ENCODE measurements at regions of chr11 and their contacts with region 1.

Region 1: GRCh38 chr11:10413268-10413667 is 41.8 kb upstream of the AMPD3 start:
- DNase-seq: no peak
- ATAC-seq: peak; percentile 96
- H3K4me3 Mint-ChIP-seq: no peak overlapping the region
- H3K27ac Mint-ChIP-seq: no peak overlapping the region
- H3K4me1 Mint-ChIP-seq: peaks cover 22% of the 10 kb centered on the region
- H3K27me3 Mint-ChIP-seq: no peaks in the 10 kb centered on the region
- CTCF ChIP-seq: no peak

Region 2: DNA sequence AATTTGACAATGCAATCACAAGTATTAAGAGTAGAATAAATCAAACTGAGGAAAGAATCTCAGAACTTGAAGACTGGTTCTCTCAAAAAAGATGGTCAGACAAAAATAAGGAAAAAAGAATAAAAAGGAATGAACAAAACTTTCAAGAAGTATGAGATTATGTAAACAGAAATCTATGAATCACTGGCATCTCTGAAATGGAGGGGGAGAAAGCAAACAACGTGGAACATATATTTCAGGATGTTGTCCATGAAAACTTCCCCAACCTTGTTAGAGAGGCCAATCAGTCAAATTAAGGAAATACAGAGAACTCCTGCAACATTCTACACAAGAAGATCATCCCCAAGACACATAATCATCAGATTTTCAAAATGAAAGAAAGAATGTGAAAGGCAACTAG is 354.9 kb before region 1 on chr11:
- CTCF ChIA-PET with region 1: no interaction called
- POLR2A ChIA-PET with region 1: no interaction called
- intact Hi-C with region 1: no loop called
- DNase-seq: no peak
- ATAC-seq: no peak
- H3K4me3 Mint-ChIP-seq: no peak overlapping the region
- H3K27ac Mint-ChIP-seq: no peak overlapping the region
- H3K4me1 Mint-ChIP-seq: no peaks in the 10 kb centered on the region
- H3K27me3 Mint-ChIP-seq: no peaks in the 10 kb centered on the region
- CTCF ChIP-seq: no peak

Region 3: DNA sequence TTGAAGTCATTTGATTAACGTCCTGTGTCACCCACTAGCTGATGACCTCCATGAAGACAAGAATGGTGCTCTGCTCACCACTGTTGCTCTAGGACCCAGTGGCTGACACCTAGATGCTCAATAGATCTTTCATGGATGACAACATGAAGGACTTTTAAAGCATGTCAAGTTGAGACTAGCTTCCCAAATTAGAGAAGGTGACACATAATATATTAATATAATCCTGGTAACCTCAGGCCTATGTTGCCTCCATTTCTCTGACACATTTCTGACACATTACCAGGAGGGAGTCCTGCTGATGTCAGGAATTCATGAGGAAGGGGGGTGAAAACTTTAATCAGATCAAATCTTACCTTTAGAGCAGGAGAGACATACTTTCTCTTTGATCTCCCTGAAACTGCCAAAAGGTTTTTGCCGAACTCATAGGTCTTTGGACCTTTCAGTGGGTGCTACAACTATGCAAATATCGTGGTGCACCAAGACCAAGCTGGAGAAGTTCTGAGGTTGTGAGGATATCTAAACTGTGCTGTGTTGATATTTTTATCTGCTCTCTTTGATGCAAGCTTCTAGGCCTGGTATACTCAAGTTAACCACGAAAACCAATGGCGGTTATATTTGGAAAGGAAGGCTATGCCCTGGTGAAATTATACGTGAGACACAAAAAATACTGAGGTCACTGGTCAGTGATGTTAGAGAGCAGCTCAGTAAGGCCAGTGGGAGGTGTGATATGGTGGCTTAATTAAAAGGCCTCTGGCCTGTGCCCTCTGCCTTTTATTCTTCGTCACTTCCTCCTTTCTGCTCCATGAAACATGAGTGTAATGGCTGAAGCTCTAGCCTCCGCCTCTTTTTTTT is 28.6 kb after region 1 on chr11:
- CTCF ChIA-PET with region 1: interaction called, 14 read pairs
- POLR2A ChIA-PET with region 1: interaction called, 15 read pairs
- intact Hi-C with region 1: no loop called
- DNase-seq: no peak
- ATAC-seq: peak; percentile 84
- H3K4me3 Mint-ChIP-seq: peak overlapping the region; percentile 60
- H3K27ac Mint-ChIP-seq: peak overlapping the region; percentile 97
- H3K4me1 Mint-ChIP-seq: peaks cover 48% of the 10 kb centered on the region
- H3K27me3 Mint-ChIP-seq: no peaks in the 10 kb centered on the region
- CTCF ChIP-seq: no peak

Region 4: GRCh38 chr11:10490398-10491241 is 77.4 kb after region 1 on chr11:
- CTCF ChIA-PET with region 1: interaction called, 14 read pairs
- POLR2A ChIA-PET with region 1: interaction called, 14 read pairs
- intact Hi-C with region 1: loop called (anchors 1 kb)
- DNase-seq: no peak
- ATAC-seq: no peak
- H3K4me3 Mint-ChIP-seq: no peak overlapping the region
- H3K27ac Mint-ChIP-seq: peak overlapping the region; percentile 91
- H3K4me1 Mint-ChIP-seq: peaks cover 43% of the 10 kb centered on the region
- H3K27me3 Mint-ChIP-seq: no peaks in the 10 kb centered on the region
- CTCF ChIP-seq: no peak

Region 5: GRCh38 chr11:10514210-10514609 is 100.9 kb after region 1 on chr11:
- CTCF ChIA-PET with region 1: interaction called, 47 read pairs
- POLR2A ChIA-PET with region 1: interaction called, 3 read pairs
- intact Hi-C with region 1: loop called (anchors 1 kb)
- DNase-seq: no peak
- ATAC-seq: no peak
- H3K4me3 Mint-ChIP-seq: no peak overlapping the region
- H3K27ac Mint-ChIP-seq: no peak overlapping the region
- H3K4me1 Mint-ChIP-seq: peaks cover 16% of the 10 kb centered on the region
- H3K27me3 Mint-ChIP-seq: no peaks in the 10 kb centered on the region
- CTCF ChIP-seq: no peak

Region 6: DNA sequence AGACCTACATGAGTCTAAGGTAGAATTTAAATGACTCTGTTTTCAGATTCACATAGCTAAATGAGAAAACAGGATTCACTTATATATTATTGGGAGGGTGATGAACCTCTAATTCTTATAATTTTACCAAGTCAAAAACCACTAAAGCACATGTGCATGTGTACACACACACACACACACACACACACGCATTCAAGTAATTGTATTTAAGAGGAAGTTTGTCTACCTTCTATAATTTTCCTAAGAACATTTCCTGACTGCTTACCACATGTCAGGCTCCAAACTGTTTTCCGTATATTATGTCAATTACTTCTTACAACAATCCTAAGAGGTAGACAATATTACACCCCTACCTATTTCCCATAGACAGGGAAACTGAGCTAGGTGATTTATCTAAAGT is 121.0 kb after region 1 on chr11:
- CTCF ChIA-PET with region 1: interaction called, 12 read pairs
- POLR2A ChIA-PET with region 1: no interaction called
- intact Hi-C with region 1: no loop called
- DNase-seq: no peak
- ATAC-seq: peak; percentile 5
- H3K4me3 Mint-ChIP-seq: no peak overlapping the region
- H3K27ac Mint-ChIP-seq: peak overlapping the region; percentile 5
- H3K4me1 Mint-ChIP-seq: peaks cover 52% of the 10 kb centered on the region
- H3K27me3 Mint-ChIP-seq: no peaks in the 10 kb centered on the region
- CTCF ChIP-seq: no peak

Region 7: DNA sequence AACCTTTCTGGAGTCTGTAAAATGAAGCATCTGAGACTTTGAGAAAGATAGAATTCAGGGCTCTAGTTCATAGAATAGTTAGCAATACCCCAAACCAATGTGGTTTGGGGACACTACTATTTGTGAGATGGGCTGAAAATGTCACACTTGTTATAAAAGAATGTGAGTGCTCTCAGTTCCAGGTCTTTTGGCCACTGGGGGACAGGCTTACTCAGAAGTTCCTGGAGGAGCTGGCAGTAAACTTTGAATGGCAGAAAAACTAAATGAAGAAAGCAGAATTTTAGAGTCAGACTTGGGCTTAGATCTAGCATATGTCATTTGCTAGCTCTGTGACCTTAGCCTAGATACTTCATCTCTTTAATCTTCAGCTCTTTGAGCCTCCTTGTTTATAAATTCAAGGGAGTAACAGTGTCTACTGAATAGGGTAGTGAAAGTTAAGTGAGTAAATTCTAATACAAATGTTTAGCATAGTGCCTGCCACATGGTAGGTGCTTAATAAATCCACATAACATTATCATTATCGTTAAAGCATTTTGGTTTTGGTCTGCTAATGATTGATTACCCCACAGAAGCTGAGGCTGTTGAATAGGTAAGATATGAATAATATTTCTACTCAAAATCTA is 151.5 kb after region 1 on chr11:
- CTCF ChIA-PET with region 1: interaction called, 10 read pairs
- POLR2A ChIA-PET with region 1: no interaction called
- intact Hi-C with region 1: no loop called
- DNase-seq: no peak
- ATAC-seq: peak; percentile 31
- H3K4me3 Mint-ChIP-seq: no peak overlapping the region
- H3K27ac Mint-ChIP-seq: peak overlapping the region; percentile 38
- H3K4me1 Mint-ChIP-seq: peaks cover 44% of the 10 kb centered on the region
- H3K27me3 Mint-ChIP-seq: no peaks in the 10 kb centered on the region
- CTCF ChIP-seq: no peak

Region 8: GRCh38 chr11:10735481-10736475 is 322.5 kb after region 1 on chr11:
- CTCF ChIA-PET with region 1: interaction called, 84 read pairs
- POLR2A ChIA-PET with region 1: no interaction called
- intact Hi-C with region 1: loop called (anchors 1 kb)
- DNase-seq: peak; percentile 93
- ATAC-seq: peak; percentile 100
- H3K4me3 Mint-ChIP-seq: peak overlapping the region; percentile 77
- H3K27ac Mint-ChIP-seq: peak overlapping the region; percentile 83
- H3K4me1 Mint-ChIP-seq: peaks cover 13% of the 10 kb centered on the region
- H3K27me3 Mint-ChIP-seq: no peaks in the 10 kb centered on the region
- CTCF ChIP-seq: peak; percentile 65

Measured in activated B cell treated with CpG ODN at 0.5 μM for 24 hours (primary cell).